ENCODE measurements at regions of chr10 and their contacts with region 1.

Region 1: GRCh38 chr10:104254493-104255310 is at the start of gene GSTO1:
- DNase-seq: peak; percentile 35
- ATAC-seq: peak; percentile 39
- H3K4me3 ChIP-seq: peak within 1 kb of the TSS; percentile 83 to 88 (median 88)
- H3K27ac ChIP-seq: peak within 1 kb of the TSS; percentile 90
- H3K4me1 ChIP-seq: peaks cover 81% of the 10 kb centered on the region
- H3K27me3 ChIP-seq: no peaks in the 10 kb centered on the region; a peak in 1 of 5 replicates
- CTCF ChIP-seq: no peak
- EP300 ChIP-seq: peak in 1 of 2 experiments; percentile 56; a peak in 1 of 4 replicates
- POLR2A ChIP-seq: peak; percentile 33 to 74; a peak in 3 of 4 replicates
- RAD21 ChIP-seq: no peak
- total RNA-seq, gene GSTO1: 300 and 418 TPM in 2 replicates

Region 2: DNA sequence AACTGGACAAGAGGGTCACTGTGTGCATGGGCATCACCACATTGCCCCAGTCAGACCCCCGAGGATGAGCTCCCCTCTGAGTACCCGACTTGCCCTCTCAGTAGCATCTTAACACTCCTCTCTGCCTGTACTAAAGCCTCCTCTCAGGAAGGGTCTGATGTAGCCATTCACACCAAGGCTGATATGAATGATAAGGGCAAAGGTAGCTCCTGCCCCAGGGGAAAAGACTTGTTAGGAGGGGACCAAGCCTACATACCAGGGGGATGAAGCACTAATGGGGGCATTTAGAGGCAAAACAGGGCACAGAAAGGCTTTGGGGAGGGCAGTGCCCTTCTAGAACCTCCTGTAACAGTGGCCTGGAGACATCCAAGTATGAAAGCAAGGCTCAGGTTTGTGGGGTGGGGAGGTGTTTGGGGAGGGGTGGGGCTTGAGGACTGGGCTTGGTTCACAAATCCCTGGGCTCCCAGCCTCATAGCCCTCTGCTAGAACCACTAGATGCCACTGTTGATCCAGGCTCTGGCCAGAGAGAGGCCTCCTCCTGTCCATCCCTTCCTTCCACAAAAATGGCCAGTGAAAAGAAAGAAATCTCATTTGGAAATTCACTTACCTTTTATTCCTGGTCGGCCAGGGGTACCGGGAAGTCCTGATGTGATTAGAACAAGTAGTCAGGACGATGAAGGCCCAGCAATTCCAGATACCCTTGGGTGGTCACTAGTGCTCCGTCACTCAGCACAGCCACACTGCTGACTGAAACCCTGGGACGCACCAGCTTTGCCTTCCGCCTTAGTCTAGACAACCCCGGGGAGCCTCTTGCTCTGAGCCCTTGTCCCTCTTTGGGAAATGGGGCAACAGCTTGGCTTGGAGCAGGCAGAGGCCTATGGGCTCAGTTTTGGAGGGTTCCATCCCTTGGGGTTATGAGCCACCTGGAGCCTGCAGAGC is 209.3 kb before region 1 on chr10:
- CTCF ChIA-PET with region 1: no interaction called
- POLR2A ChIA-PET with region 1: no interaction called
- in situ Hi-C with region 1: no loop called
- intact Hi-C with region 1: no loop called
- DNase-seq: peak; percentile 45
- ATAC-seq: peak; percentile 89
- H3K4me3 ChIP-seq: no peak overlapping the region
- H3K27ac ChIP-seq: no peak overlapping the region
- H3K4me1 ChIP-seq: peaks cover 9% of the 10 kb centered on the region
- H3K27me3 ChIP-seq: peaks cover 6 to 71% of the 10 kb centered on the region in 2 experiments
- CTCF ChIP-seq: peak; percentile 70
- EP300 ChIP-seq: no peak
- POLR2A ChIP-seq: no peak
- RAD21 ChIP-seq: peak; percentile 58

Region 3: DNA sequence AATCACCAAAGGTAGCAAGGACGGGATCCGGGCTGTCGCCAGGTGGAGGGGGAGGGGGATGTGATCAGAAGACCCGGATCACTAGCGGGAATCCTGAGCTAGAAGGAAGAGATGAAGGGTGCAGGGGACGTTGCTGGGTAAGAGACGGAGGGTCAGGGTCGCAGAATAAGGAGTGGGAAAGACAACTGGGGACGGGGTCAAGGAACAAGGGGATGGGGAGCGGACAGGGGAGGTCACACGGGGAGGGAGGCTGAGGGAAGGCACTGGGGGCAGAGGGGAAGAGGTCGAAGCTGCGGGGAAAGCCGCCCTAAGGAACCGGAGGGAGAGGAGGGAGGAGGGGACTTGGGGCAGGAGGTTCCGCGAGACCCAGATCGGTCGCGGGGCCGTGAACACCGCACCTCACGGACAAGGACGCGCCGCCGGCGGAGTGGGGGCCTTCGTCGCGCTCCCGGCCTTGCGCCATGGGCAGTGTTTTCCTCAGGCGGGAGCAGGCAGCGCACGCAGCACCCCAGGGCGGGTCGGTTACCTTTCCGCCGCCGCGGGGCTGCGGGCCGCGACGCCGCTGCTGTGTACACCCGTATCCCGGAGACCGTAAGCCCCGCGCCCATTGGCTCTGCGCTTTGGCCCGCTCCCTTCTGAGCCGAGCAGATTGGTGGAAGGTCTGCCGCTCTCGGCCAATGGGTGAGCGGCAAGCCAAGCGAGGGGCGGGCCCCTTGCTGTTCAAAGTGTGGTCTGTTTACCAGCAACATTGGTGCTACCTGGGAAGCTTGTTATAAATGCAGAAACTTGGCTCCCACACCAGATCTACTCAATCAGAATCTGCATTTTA is 22.7 kb before region 1 on chr10 and contains the start of gene CFAP43:
- CTCF ChIA-PET with region 1: no interaction called
- POLR2A ChIA-PET with region 1: interaction called, 59 read pairs
- in situ Hi-C with region 1: no loop called
- intact Hi-C with region 1: loop called (anchors 1 kb)
- DNase-seq: peak; percentile 93
- ATAC-seq: peak; percentile 100
- H3K4me3 ChIP-seq: peak within 1 kb of the TSS; percentile 79 to 93 (median 86)
- H3K27ac ChIP-seq: peak within 1 kb of the TSS; percentile 82
- H3K4me1 ChIP-seq: peaks cover 21% of the 10 kb centered on the region
- H3K27me3 ChIP-seq: no peaks in the 10 kb centered on the region; a peak in 1 of 5 replicates
- CTCF ChIP-seq: no peak; the same call in 1 of the 2 replicates
- EP300 ChIP-seq: no peak
- POLR2A ChIP-seq: peak; percentile 49 to 61; a peak in 3 of 4 replicates
- RAD21 ChIP-seq: peak; percentile 30; the same call in 1 of the 2 replicates
- total RNA-seq, gene CFAP43: 0.24 and 0.46 TPM in 2 replicates

Region 4: DNA sequence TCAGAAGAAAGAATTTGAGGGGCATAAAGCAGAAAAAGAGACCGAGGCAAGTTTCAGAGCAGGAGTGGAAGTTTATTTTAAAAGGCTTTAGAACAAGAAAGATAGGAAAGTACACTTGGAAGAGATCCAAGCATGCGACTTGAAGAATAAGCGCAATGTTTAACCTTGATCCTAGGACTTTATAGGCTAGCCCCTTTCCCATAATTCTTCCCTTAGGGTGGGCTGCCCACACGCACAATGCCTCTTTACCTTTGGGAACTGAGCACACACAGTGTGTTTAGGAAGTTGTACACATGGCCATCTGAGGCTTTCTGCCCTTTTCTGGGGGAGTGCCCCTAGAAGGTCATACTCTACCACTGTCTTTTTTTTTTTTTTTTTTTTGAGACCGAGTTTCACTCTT is 11.2 kb before region 1 on chr10:
- CTCF ChIA-PET with region 1: no interaction called
- POLR2A ChIA-PET with region 1: interaction called, 11 read pairs
- in situ Hi-C with region 1: no loop called
- intact Hi-C with region 1: no loop called
- DNase-seq: peak; percentile 33
- ATAC-seq: peak; percentile 66
- H3K4me3 ChIP-seq: peak overlapping the region in 1 of 3 experiments; percentile 17; a peak in 1 of 6 replicates
- H3K27ac ChIP-seq: peak overlapping the region; percentile 57
- H3K4me1 ChIP-seq: peaks cover 19% of the 10 kb centered on the region
- H3K27me3 ChIP-seq: no peaks in the 10 kb centered on the region
- CTCF ChIP-seq: no peak
- EP300 ChIP-seq: no peak
- POLR2A ChIP-seq: no peak
- RAD21 ChIP-seq: no peak

Region 5: GRCh38 chr10:104274762-104275721 is 20.3 kb after region 1 on chr10:
- CTCF ChIA-PET with region 1: no interaction called
- POLR2A ChIA-PET with region 1: interaction called, 51 read pairs
- in situ Hi-C with region 1: no loop called
- intact Hi-C with region 1: no loop called
- DNase-seq: no peak
- ATAC-seq: peak; percentile 83
- H3K4me3 ChIP-seq: peak overlapping the region; percentile 28 to 45 (median 28); a peak in 1 of 6 replicates
- H3K27ac ChIP-seq: no peak overlapping the region
- H3K4me1 ChIP-seq: peaks cover 66% of the 10 kb centered on the region
- H3K27me3 ChIP-seq: no peaks in the 10 kb centered on the region
- CTCF ChIP-seq: peak; percentile 90
- EP300 ChIP-seq: no peak
- POLR2A ChIP-seq: no peak
- RAD21 ChIP-seq: peak; percentile 84

Region 6: GRCh38 chr10:104291439-104291951 is 36.8 kb after region 1 on chr10:
- CTCF ChIA-PET with region 1: no interaction called
- POLR2A ChIA-PET with region 1: interaction called, 30 read pairs
- in situ Hi-C with region 1: no loop called
- intact Hi-C with region 1: no loop called
- DNase-seq: peak; percentile 78
- ATAC-seq: peak; percentile 82
- H3K4me3 ChIP-seq: peak overlapping the region in 2 of 3 experiments; percentile 15 to 31; a peak in 2 of 6 replicates
- H3K27ac ChIP-seq: no peak overlapping the region
- H3K4me1 ChIP-seq: peaks cover 49% of the 10 kb centered on the region
- H3K27me3 ChIP-seq: peaks cover 0 to 11% of the 10 kb centered on the region in 2 experiments; a peak in 2 of 5 replicates
- CTCF ChIP-seq: peak; percentile 98
- EP300 ChIP-seq: 0 out of 4 replicates have a peak, but pooled peaks of 1 of the 2 experiments have one; percentile 6
- POLR2A ChIP-seq: no peak
- RAD21 ChIP-seq: peak; percentile 89

Measured in HepG2 (cell line).